ENCODE measurements at regions of chr4 and their contacts with region 1.

Region 1: DNA sequence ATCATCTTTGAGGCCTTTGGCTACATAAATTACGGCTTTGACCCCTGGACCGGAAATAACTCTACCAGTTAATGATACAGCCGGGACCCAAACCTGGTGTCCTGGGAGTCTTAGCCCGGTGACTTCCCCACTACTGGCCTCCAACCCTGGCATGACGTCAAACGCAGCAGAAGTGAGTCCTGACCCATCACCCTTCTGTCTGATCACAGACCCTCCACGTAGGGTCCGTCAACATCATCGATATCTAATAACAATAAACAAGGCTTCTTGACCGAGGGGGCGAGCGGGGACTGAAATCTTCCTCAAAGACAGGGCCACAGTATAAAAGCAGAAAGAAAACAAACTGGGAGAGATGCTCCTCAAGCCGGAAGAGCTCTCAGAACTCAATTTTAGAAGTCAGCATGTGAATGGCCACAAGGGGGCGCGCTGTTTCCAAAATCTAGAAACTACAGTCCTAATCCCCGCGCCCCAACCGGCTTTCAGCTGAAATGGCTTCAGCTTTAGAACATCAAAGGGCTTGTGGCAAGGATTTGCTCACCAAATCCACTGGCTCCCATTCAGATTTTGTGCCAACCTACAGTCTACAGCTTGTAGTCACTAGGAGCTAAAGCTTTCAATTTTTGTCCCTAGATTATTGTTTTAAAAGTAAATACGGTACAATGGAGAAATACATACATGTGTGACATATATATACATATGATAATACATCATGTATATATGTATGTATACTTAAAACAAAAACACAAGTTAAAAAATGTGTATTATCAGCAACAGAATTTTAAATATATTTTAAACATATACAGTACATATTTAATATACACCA is 46.4 kb upstream of the ENPP6 start:
- DNase-seq: peak; percentile 85 to 86
- H3K4me3 ChIP-seq: no peak overlapping the region
- H3K4me3 Mint-ChIP-seq: peak overlapping the region; percentile 13
- H3K27ac Mint-ChIP-seq: no peak overlapping the region
- H3K4me1 ChIP-seq: no peaks in the 10 kb centered on the region
- H3K4me1 Mint-ChIP-seq: peaks cover 14% of the 10 kb centered on the region
- H3K27me3 ChIP-seq: no peaks in the 10 kb centered on the region
- H3K27me3 Mint-ChIP-seq: peaks cover 3% of the 10 kb centered on the region
- CTCF ChIP-seq: peak; percentile 81

Region 2: DNA sequence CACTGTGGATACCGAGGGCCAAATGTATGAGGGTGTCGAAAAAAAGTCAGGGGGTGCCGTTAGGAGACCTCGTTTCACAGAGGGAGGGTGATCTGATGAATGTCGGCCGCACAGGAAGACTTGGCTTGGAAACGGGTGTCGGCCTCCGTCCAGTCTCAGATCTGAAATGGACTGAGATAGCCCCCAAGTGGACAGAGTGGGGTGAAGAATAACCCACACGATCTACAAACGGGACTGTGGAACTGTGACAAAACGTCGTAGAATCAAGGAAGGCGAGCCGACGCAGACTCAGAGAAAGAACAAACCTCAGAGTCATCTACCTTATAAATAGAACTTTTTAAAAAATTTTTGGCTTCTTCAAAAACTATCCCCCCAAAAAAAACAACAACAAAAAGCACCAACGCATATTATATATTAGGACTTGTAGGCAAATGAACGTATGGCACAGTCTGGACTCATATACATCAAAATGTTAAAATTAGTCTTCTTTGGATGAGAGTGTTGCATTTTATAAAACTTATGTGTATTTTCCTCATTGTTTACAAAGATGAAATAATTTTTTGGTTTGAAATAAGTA is 274.0 kb after region 1 on chr4:
- CTCF ChIA-PET with region 1: interaction called, 10 read pairs
- POLR2A ChIA-PET with region 1: interaction called, 3 read pairs
- intact Hi-C with region 1: loop called (anchors 1 kb)
- DNase-seq: peak; percentile 83
- H3K4me3 ChIP-seq: peak overlapping the region; percentile 39
- H3K4me3 Mint-ChIP-seq: peak overlapping the region; percentile 86
- H3K27ac Mint-ChIP-seq: peak overlapping the region; percentile 90
- H3K4me1 ChIP-seq: peaks cover 16% of the 10 kb centered on the region
- H3K4me1 Mint-ChIP-seq: peaks cover 23% of the 10 kb centered on the region
- H3K27me3 ChIP-seq: no peaks in the 10 kb centered on the region
- H3K27me3 Mint-ChIP-seq: no peaks in the 10 kb centered on the region
- CTCF ChIP-seq: peak; percentile 63 to 67

Region 3: GRCh38 chr4:184733654-184734524 is 469.8 kb after region 1 on chr4 and contains the start of gene CENPU:
- CTCF ChIA-PET with region 1: no interaction called
- POLR2A ChIA-PET with region 1: no interaction called
- intact Hi-C with region 1: loop called (anchors 10 kb)
- DNase-seq: peak; percentile 97
- H3K4me3 ChIP-seq: peak within 1 kb of the TSS; percentile 64
- H3K4me3 Mint-ChIP-seq: peak within 1 kb of the TSS; percentile 99
- H3K27ac Mint-ChIP-seq: peak within 1 kb of the TSS; percentile 94
- H3K4me1 ChIP-seq: no peaks in the 10 kb centered on the region
- H3K4me1 Mint-ChIP-seq: no peaks in the 10 kb centered on the region
- H3K27me3 ChIP-seq: no peaks in the 10 kb centered on the region
- H3K27me3 Mint-ChIP-seq: no peaks in the 10 kb centered on the region
- CTCF ChIP-seq: no peak
- total RNA-seq, gene CENPU: 42.8 and 52.0 TPM in 2 replicates

Measured in Caco-2 (cell line).